Activated T-helper 1 cell treated with anti-CD3 and anti-CD28 coated beads, Interleukin-12 subunit alpha, Interleukin-12 subunit beta, Interleukin-2, Interleukin-4 antibody, amounts not matched to agents 30 ng/mL and 10 ng/mL and 1 ng/mL, durations not matched to agents 14 hours and 24 hours and 36 hours (primary cell): ENCODE measurements at regions of chr16 and their contacts with region 1.

Region 1: DNA sequence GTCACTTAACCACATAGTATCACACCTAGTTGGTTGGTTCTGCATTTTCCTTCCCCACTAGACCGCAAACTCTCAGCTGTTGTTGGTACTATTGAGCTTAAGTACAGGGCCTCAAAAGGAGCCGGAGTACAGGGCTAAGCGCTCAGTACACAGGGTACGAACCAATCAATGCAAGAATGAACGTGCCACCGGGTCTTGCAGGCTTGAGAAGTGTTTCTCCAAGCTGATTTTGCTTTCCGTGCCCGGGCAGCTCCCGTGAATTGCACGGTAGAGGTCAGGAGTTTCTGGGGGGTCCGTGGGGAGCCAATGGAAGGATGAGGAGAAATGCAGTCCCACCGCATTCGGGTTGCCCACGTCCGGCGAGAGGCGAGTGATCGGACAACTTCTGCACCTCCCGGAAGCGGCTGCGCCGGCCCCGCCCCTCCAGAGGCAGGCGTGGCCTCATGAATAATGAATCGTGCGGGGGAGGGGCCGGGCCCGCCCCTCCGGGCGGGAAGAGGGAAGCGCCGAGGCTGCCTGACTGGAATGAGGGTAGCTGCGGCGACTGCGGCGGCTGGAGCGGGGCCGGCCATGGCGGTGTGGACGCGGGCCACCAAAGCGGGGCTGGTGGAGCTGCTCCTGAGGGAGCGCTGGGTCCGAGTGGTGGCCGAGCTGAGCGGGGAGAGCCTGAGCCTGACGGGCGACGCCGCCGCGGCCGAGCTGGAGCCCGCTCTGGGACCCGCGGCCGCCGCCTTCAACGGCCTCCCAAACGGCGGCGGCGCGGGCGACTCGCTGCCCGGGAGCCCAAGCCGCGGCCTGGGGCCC is at the start of gene SNTB2:
- DNase-seq: peak; percentile 83
- H3K4me3 Mint-ChIP-seq: peak within 1 kb of the TSS; percentile 95
- H3K27ac Mint-ChIP-seq: peak within 1 kb of the TSS; percentile 97
- H3K4me1 Mint-ChIP-seq: peaks cover 57% of the 10 kb centered on the region
- H3K27me3 Mint-ChIP-seq: no peaks in the 10 kb centered on the region
- total RNA-seq, gene SNTB2: 27.9 and 29.4 TPM in 2 replicates

Region 2: GRCh38 chr16:68538880-68539701 is 647.8 kb before region 1 on chr16 and contains the start of gene ZFP90:
- intact Hi-C with region 1: loop called (anchors 2 kb)
- DNase-seq: peak; percentile 84
- H3K4me3 Mint-ChIP-seq: peak within 1 kb of the TSS; percentile 95
- H3K27ac Mint-ChIP-seq: peak within 1 kb of the TSS; percentile 96
- H3K4me1 Mint-ChIP-seq: peaks cover 14% of the 10 kb centered on the region
- H3K27me3 Mint-ChIP-seq: no peaks in the 10 kb centered on the region
- total RNA-seq, gene ZFP90: 19.3 and 21.9 TPM in 2 replicates

Region 3: DNA sequence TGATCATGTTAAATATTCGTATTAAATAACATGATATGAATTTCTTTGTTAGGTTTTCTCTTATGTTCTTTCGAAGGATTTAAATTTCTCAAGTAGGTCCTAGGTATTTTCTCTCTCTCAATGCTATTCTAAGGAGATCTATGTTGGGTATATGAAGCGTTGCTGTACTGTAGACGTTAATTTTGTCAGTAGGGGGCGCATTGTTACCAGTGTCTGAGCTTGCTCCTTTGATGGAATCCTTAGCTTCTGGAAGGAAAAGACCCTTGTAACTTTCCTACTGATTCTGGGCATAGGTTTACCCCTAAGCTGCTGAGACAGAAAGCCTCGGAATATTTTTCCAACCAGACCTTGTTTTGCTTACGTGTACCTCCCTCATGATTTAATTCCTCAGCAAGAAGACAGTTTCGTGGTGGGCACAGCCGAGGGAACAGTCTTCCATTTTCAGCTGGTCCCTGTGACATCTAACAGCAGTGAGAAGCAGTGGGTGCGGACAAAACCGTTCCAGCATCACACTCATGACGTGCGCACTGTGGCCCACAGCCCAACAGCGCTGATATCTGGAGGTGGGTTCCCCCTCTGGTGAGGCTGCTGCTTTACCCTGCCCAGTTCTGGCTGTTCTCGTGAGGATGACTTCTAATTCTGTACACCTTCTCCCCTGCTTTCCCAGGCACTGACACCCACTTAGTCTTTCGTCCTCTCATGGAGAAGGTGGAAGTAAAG is 36.5 kb before region 1 on chr16:
- intact Hi-C with region 1: loop called (anchors 5 kb)
- DNase-seq: peak; percentile 34
- H3K4me3 Mint-ChIP-seq: no peak overlapping the region
- H3K27ac Mint-ChIP-seq: no peak overlapping the region
- H3K4me1 Mint-ChIP-seq: no peaks in the 10 kb centered on the region
- H3K27me3 Mint-ChIP-seq: no peaks in the 10 kb centered on the region

Region 4: DNA sequence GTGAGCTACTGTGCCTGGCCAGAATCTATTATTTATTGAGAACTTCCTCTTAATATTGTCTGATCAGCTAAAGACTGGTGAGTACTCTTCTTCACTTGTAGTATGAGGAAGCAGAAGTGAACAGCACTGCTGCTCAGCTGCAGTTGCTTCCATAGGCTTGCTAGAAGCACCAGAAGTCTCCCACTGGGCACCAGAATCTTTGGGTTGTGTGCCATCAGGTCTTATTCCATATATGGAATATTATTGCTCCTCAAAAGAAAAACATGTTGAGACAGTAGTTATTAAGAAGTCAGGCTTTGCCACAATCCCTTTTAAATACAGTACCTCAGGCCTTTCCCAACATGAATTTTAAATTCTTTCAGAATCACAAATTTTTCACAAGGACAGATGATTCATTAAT is 17.3 kb after region 1 on chr16:
- intact Hi-C with region 1: loop called (anchors 2 kb)
- DNase-seq: no peak
- H3K4me3 Mint-ChIP-seq: no peak overlapping the region
- H3K27ac Mint-ChIP-seq: peak overlapping the region; percentile 82
- H3K4me1 Mint-ChIP-seq: peaks cover 27% of the 10 kb centered on the region
- H3K27me3 Mint-ChIP-seq: no peaks in the 10 kb centered on the region

Region 5: GRCh38 chr16:69386596-69386995 is 199.8 kb after region 1 on chr16:
- intact Hi-C with region 1: loop called (anchors 5 kb)
- DNase-seq: no peak
- H3K4me3 Mint-ChIP-seq: peak overlapping the region; percentile 92
- H3K27ac Mint-ChIP-seq: no peak overlapping the region
- H3K4me1 Mint-ChIP-seq: peaks cover 26% of the 10 kb centered on the region
- H3K27me3 Mint-ChIP-seq: no peaks in the 10 kb centered on the region